ENCODE measurements at regions of chr15 and their contacts with region 1.

Region 1: DNA sequence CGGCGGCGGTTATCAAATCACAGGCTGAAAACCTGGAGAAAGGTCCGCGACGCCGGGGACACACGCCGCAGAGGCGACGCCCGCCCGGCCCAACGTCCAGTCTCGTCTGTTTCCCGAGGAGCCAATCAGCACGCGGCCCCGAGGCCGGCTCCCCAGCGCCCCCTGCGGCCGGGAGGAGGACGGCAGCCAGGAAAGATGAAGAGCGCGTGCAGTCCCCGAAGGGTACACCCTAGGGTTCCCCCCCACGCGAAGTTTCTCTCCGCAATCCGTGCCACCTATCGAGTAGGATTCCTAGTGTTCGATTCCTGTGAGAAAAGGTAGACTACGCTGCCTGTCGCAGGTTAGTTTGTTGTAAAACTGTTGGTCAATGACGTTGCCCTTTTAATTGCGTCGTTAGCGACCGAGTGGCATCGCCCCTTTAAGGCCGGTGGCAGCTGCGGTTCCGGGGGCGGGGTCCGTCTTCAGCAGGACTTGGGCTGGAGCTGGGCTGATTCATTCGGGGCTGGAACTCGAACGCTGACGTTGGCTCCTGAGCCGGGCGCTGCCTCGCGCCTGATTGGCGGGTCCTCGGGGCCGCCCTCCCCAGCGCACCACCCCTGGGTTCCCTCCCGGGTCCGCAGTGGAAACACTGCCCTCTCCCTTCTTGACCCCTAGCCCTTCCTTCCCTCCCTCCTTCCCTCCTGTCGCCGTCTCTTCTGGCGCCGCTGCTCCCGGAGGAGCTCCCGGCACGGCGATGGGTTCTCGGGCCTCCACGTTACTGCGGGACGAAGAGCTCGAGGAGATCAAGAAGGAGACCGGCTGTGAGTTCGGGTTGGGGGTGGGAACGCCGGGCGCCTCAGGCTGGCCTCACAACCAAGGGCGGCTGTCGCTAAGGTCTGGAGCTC is at the starts of genes CHP1 and EXD1:
- DNase-seq: peak; percentile 98 to 99
- ATAC-seq: peak; percentile 91 to 94
- H3K4me3 ChIP-seq: peak within 1 kb of the TSS; percentile 73 to 91 (median 86)
- H3K27ac ChIP-seq: peak within 1 kb of the TSS; percentile 91 to 97 (median 94)
- H3K4me1 ChIP-seq: peaks cover 31 to 35% of the 10 kb centered on the region in 2 donors
- H3K27me3 ChIP-seq: no peaks in the 10 kb centered on the region
- CTCF ChIP-seq: peak; percentile 91 to 98 (median 93)
- POLR2A ChIP-seq: peak; percentile 88 to 90
- total RNA-seq, gene CHP1: 208 to 293 (median 266) TPM
- total RNA-seq, gene EXD1: not detected

Region 2: GRCh38 chr15:40941528-40942336 is 289.2 kb before region 1 on chr15:
- in situ Hi-C with region 1: no loop called
- intact Hi-C with region 1: loop called (anchors 5 kb)
- DNase-seq: peak; percentile 41 to 56
- ATAC-seq: peak; percentile 62 to 68
- H3K4me3 ChIP-seq: peak overlapping the region; percentile 57 to 81 (median 68)
- H3K27ac ChIP-seq: peak overlapping the region; percentile 76 to 85 (median 82)
- H3K4me1 ChIP-seq: peaks cover 25 to 47% of the 10 kb centered on the region in 2 donors
- H3K27me3 ChIP-seq: peaks cover 0 to 4% (median 0%) of the 10 kb centered on the region in 3 donors
- CTCF ChIP-seq: peak in 4 of 5 experiments; percentile 94 to 97 (median 95)
- POLR2A ChIP-seq: peak; percentile 51 to 53

Region 3: GRCh38 chr15:41116116-41116871 is 114.6 kb before region 1 on chr15 and contains the start of gene INO80:
- in situ Hi-C with region 1: no loop called
- intact Hi-C with region 1: loop called (anchors 1 kb)
- DNase-seq: peak; percentile 98
- ATAC-seq: peak; percentile 93 to 94
- H3K4me3 ChIP-seq: peak within 1 kb of the TSS; percentile 81 to 97 (median 90)
- H3K27ac ChIP-seq: peak within 1 kb of the TSS; percentile 97 to 100 (median 100)
- H3K4me1 ChIP-seq: peaks cover 10 to 24% of the 10 kb centered on the region in 2 donors
- H3K27me3 ChIP-seq: no peaks in the 10 kb centered on the region
- CTCF ChIP-seq: peak in 1 of 5 experiments; percentile 32
- POLR2A ChIP-seq: peak; percentile 74 to 77
- total RNA-seq, gene INO80: 25.5 to 33.0 (median 27.8) TPM

Region 4: GRCh38 chr15:41180206-41180789 is 50.6 kb before region 1 on chr15:
- in situ Hi-C with region 1: no loop called
- intact Hi-C with region 1: no loop called
- DNase-seq: no peak
- ATAC-seq: no peak
- H3K4me3 ChIP-seq: no peak overlapping the region
- H3K27ac ChIP-seq: no peak overlapping the region
- H3K4me1 ChIP-seq: no peaks in the 10 kb centered on the region
- H3K27me3 ChIP-seq: no peaks in the 10 kb centered on the region
- CTCF ChIP-seq: no peak
- POLR2A ChIP-seq: no peak

Region 5: DNA sequence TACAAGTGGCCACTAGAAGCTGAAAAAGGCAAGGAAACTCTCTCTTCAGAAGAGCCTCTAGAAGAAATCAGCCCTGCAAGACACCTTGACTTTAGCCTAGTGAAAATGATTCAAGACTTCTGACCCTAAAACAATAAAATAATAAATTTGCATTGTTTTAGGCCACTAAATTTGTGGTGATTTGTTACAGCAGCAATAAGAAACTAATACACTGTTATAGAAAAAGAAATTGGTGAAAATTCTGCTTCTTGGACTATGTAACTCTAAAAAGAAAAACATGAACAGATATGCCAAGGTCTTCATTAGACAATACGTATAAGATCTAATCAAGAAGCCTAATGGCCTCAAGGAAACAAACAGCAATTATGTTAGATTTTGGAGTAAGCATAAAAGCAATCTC is 36.4 kb before region 1 on chr15:
- in situ Hi-C with region 1: no loop called
- intact Hi-C with region 1: no loop called
- DNase-seq: no peak
- ATAC-seq: no peak
- H3K4me3 ChIP-seq: no peak overlapping the region
- H3K27ac ChIP-seq: no peak overlapping the region
- H3K4me1 ChIP-seq: no peaks in the 10 kb centered on the region
- H3K27me3 ChIP-seq: peaks cover 0 to 3% (median 0%) of the 10 kb centered on the region in 3 donors
- CTCF ChIP-seq: no peak
- POLR2A ChIP-seq: no peak

Region 6: GRCh38 chr15:41256577-41257038 is 25.7 kb after region 1 on chr15:
- in situ Hi-C with region 1: no loop called
- intact Hi-C with region 1: no loop called
- DNase-seq: no peak
- ATAC-seq: no peak
- H3K4me3 ChIP-seq: no peak overlapping the region
- H3K27ac ChIP-seq: no peak overlapping the region
- H3K4me1 ChIP-seq: peaks cover 18% of the 10 kb centered on the region in 2 donors
- H3K27me3 ChIP-seq: no peaks in the 10 kb centered on the region
- CTCF ChIP-seq: no peak
- POLR2A ChIP-seq: no peak

Region 7: DNA sequence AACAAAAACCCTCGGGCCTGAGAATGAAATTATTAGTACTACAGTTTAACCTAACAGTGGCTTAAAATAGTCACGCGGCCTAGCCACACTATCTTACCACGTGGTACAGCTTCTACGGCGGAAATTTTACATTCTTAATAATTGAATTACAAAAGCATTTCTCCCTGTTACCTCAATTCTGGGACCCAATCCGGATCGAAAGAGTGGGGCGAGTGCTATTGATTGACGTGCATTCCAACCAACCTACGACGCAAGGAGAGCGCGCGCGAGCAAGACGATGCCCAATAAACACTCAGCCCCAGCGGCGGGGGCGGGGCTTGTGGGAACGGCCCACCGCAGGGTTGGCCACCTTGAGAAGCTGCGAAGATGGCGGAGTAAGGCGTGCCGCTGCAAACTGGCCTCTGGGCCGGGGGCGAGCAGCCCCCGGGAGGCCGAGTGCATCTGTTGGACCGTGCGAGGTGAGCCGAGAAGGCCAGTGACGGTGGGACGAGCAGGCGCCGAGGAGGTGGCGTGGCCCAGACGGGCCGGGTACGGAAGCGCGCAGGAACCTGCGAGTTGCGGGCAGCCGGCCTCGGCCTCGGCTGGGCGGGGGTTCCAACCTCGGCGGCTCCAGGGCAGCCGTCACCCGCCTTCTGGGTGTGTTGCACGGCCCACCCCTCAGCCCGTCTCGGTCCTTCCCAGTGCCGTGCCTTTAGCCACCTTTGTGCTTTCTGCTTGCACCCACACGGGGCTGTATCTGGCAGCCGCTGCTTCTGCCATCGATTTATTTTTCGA is 52.9 kb after region 1 on chr15:
- in situ Hi-C with region 1: no loop called
- intact Hi-C with region 1: loop called (anchors 1 kb)
- DNase-seq: peak; percentile 98
- ATAC-seq: peak; percentile 96 to 98
- H3K4me3 ChIP-seq: peak overlapping the region; percentile 93 to 98 (median 96)
- H3K27ac ChIP-seq: peak overlapping the region; percentile 94 to 99 (median 96)
- H3K4me1 ChIP-seq: peaks cover 19 to 30% of the 10 kb centered on the region in 2 donors
- H3K27me3 ChIP-seq: no peaks in the 10 kb centered on the region
- CTCF ChIP-seq: peak in 1 of 5 experiments; percentile 10
- POLR2A ChIP-seq: peak; percentile 87 to 93

Region 8: DNA sequence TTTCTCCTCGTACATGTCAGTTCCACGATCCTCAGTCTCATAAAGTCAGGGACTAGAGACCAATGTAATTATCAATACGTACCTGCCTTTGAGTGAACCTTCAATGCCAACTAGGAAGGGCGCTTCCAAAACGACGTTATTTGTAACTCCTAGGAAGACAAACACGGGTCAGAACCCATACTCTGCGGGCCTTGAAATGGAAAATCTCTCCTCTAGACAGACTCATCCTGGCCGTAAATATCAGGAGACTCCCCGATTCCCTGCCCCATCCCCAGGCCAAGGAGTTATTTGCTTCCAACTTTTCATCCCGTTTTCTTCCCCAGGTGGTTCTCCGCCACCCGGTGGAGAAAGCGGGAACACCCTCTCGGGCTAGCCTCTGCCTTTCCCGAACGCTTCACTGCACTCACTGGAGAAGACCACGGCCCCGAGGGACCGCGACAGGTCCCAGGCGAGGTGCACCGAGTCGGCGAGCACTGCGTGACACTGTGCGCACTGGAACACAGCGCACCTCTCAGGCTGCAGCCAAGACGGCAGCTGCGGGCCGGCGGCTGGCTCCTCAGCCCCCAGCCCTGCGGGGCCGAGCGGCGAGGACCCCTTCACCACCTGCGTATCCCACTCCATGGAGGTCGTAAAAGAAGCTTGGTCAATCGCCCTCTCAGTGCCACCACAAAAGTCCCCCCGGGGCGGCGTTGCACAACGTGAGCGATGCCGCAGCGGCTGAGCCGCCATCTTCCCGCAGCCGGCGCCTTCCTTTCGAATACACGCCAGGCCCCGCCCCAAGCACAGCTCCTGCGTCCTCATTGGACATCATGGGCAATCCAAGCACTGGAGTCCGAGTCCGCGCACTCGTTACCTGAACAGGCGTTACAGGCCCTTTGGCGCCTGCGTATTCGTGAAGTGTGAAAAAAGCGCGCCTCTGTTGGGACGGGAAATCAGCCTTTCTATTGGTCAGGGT is 101.2 kb after region 1 on chr15 and contains the start of gene OIP5:
- in situ Hi-C with region 1: no loop called
- intact Hi-C with region 1: loop called (anchors 1 kb)
- DNase-seq: peak; percentile 99
- ATAC-seq: peak; percentile 97 to 98
- H3K4me3 ChIP-seq: peak within 1 kb of the TSS; percentile 88 to 99 (median 94)
- H3K27ac ChIP-seq: peak within 1 kb of the TSS; percentile 82 to 91 (median 88)
- H3K4me1 ChIP-seq: peaks cover 15 to 18% of the 10 kb centered on the region in 2 donors
- H3K27me3 ChIP-seq: no peaks in the 10 kb centered on the region
- CTCF ChIP-seq: peak; percentile 77 to 87 (median 83)
- POLR2A ChIP-seq: no peak
- total RNA-seq, gene OIP5: 1.9 to 7.8 (median 4.0) TPM

Region 9: GRCh38 chr15:41347236-41347635 is 116.3 kb after region 1 on chr15:
- in situ Hi-C with region 1: no loop called
- intact Hi-C with region 1: loop called (anchors 5 kb)
- DNase-seq: no peak
- ATAC-seq: no peak
- H3K4me3 ChIP-seq: no peak overlapping the region
- H3K27ac ChIP-seq: peak overlapping the region in 1 of 4 donors; percentile 44
- H3K4me1 ChIP-seq: peaks cover 6 to 20% of the 10 kb centered on the region in 2 donors
- H3K27me3 ChIP-seq: no peaks in the 10 kb centered on the region
- CTCF ChIP-seq: no peak
- POLR2A ChIP-seq: no peak

Region 10: GRCh38 chr15:41416742-41417406 is 186.0 kb after region 1 on chr15 and contains the start of gene RTF1:
- in situ Hi-C with region 1: no loop called
- intact Hi-C with region 1: loop called (anchors 5 kb)
- DNase-seq: peak; percentile 89 to 92
- ATAC-seq: peak; percentile 90 to 93
- H3K4me3 ChIP-seq: peak within 1 kb of the TSS; percentile 82 to 94 (median 86)
- H3K27ac ChIP-seq: peak within 1 kb of the TSS; percentile 85 to 96 (median 92)
- H3K4me1 ChIP-seq: peaks cover 16 to 20% of the 10 kb centered on the region in 2 donors
- H3K27me3 ChIP-seq: no peaks in the 10 kb centered on the region
- CTCF ChIP-seq: no peak
- POLR2A ChIP-seq: peak; percentile 86
- total RNA-seq, gene RTF1: 22.7 to 46.8 (median 24.3) TPM